GM10248 (cell line): ENCODE measurements at regions of chr7 and their contacts with region 1.

Region 1: GRCh38 chr7:114922652-114923402 is 933 bp downstream of the MDFIC start:
- DNase-seq: peak; percentile 47
- CTCF ChIP-seq: no peak

Region 2: GRCh38 chr7:114939484-114940097 is 16.8 kb after region 1 on chr7:
- CTCF ChIA-PET with region 1: interaction called, 61 read pairs
- POLR2A ChIA-PET with region 1: no interaction called
- DNase-seq: no peak
- CTCF ChIP-seq: peak; percentile 60

Region 3: GRCh38 chr7:115116773-115117715 is 194.2 kb after region 1 on chr7:
- CTCF ChIA-PET with region 1: no interaction called
- POLR2A ChIA-PET with region 1: no interaction called
- DNase-seq: no peak
- CTCF ChIP-seq: no peak